Activated CD4-positive, alpha-beta T cell treated with anti-CD3 and anti-CD28 coated beads for 36 hours (primary cell): ENCODE measurements at regions of chr2 and their contacts with region 1.

Region 1: DNA sequence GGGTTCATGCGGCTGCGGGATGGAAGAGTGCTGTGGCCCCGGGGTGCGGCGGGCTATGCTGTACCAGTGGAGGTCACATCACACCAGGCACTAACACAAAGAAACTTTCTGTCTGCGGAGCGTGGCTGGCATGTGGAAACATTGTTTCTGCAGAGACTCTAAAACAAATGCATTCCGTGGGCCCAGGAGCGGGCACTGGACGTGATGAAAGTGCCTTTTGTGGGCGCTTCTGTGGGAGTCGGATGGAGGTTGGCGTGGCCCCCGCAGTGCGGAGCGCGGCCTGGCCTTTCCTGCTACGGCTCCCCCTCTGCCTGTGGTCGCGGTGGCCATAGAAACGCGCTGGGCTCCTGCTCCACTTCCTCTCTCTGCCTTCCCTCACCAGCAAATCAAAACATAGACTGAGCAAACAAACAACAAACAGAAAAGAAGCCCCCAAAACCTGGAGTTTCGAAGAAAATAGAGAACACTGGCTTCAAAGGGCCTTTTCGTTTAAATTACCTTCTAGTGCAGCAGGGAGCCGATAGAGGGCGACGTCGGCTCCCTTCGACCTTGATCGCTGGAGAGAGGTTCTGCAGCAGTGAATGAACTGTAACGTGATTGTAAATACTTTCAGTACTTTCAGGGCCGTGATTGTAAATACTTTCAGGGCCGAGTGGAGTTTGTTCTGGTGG is 51.4 kb downstream of the KIF5C start:
- DNase-seq: peak; percentile 78
- ATAC-seq: peak; percentile 84
- H3K4me3 Mint-ChIP-seq: peak overlapping the region; percentile 78
- H3K27ac Mint-ChIP-seq: peak overlapping the region; percentile 88
- H3K4me1 Mint-ChIP-seq: peaks cover 16% of the 10 kb centered on the region
- H3K27me3 Mint-ChIP-seq: no peaks in the 10 kb centered on the region

Region 2: DNA sequence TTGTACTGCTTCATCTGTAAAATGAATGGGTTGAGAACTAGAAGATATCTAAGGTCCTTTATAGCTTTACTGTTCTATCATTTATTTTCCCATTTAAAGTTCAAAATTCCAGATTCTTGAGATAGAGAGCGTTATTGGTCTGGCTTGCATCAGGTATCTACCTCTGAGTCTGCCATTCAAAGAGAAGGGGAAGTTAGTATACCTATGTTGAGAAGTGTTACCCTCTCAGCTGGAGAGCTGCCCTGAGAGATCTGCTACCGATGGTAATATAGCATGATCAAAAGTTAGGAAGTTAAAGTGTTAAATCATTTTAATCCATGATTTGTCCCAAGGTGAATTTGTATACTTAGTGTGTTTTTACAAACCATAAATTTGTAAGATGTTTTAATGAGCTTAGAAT is 274.5 kb before region 1 on chr2:
- CTCF ChIA-PET with region 1: no interaction called
- POLR2A ChIA-PET with region 1: no interaction called
- intact Hi-C with region 1: no loop called
- DNase-seq: no peak
- ATAC-seq: no peak
- H3K4me3 Mint-ChIP-seq: peak overlapping the region; percentile 16
- H3K27ac Mint-ChIP-seq: no peak overlapping the region
- H3K4me1 Mint-ChIP-seq: peaks cover 86% of the 10 kb centered on the region
- H3K27me3 Mint-ChIP-seq: no peaks in the 10 kb centered on the region

Region 3: GRCh38 chr2:148888003-148888501 is 38.4 kb before region 1 on chr2:
- CTCF ChIA-PET with region 1: no interaction called
- POLR2A ChIA-PET with region 1: no interaction called
- intact Hi-C with region 1: loop called in 1 of 2 experiments (anchors 5 kb)
- DNase-seq: peak; percentile 39
- ATAC-seq: peak; percentile 39
- H3K4me3 Mint-ChIP-seq: peak overlapping the region; percentile 69
- H3K27ac Mint-ChIP-seq: no peak overlapping the region
- H3K4me1 Mint-ChIP-seq: peaks cover 12% of the 10 kb centered on the region
- H3K27me3 Mint-ChIP-seq: peaks cover 37% of the 10 kb centered on the region

Region 4: DNA sequence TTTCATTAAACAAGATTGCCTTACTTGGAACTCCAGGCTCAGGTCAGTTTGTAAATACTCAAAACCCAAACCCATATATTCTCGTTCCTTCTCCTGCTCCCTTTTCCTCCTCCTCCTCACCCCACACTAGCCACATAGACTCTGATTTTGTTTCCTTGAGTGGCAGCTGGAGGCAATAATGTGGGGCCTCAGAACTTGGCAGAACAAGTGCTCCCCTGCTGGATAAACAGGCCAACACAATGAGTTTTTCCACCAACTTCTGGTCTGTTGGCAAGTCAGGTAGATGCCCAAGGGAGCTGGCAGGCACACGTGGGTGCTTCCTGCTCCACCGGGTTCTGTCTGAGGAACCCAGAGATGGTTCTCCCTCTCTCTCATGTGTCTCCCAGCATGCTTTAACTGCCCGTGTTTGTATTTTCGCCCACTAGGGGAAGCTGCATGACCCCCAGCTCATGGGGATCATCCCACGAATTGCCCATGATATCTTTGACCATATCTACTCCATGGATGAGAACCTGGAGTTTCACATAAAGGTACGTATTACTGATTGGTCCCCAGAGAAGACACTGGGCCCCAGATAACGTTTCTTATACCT is 10.5 kb after region 1 on chr2:
- CTCF ChIA-PET with region 1: interaction called, 14 read pairs
- POLR2A ChIA-PET with region 1: no interaction called
- intact Hi-C with region 1: no loop called
- DNase-seq: no peak
- ATAC-seq: no peak
- H3K4me3 Mint-ChIP-seq: no peak overlapping the region
- H3K27ac Mint-ChIP-seq: no peak overlapping the region
- H3K4me1 Mint-ChIP-seq: no peaks in the 10 kb centered on the region
- H3K27me3 Mint-ChIP-seq: no peaks in the 10 kb centered on the region